ENCODE measurements at regions of chr1 and their contacts with region 1.

Region 1: DNA sequence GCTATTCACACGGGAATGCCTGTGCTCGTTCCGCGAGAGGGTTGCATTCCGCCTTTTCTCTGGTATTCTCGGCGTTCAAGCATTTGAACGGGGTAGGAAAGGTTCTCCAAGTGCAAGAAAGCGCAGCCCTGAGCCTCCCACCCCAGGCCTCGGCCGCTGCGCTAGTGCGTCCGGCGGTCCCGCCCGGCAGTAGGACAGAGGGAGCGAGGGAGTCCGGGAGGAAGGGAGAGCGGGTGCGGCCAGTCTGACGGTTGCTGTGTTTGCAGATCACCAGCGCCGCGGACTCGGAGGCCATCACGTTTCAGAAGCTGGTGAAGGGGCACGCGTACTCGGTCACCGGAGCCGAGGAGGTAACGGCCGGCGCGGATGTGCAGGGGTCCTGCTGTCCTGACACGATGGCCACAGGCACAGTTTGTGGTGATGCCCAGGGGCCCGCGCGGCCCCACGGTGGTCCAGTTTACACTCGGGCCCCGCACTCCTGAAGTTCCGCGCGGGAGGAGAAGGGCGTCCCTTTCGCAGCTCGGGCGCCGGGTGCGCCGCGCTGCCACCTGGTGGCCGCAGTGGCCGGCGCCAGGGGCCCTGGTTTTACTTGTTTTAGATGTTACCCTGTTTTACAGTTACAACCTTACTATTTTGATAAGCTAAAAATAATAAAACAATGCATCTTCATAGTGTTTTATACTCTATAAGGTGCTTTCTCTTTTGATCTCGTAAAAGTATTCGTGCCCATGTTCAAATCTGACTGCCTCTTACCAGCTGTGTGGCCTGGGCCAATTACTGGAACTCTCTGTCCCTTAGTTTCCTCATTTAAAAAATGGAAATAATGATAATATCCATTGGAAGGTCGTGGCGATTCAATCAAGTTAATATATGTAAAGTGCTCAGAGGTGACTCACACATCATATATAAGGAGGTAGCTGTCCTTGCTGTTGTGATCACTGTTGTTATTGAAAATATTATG is 36.7 kb downstream of the CAPN2 start:
- DNase-seq: peak; percentile 53 to 75
- ATAC-seq: peak; percentile 83 to 91 (median 88)
- H3K4me3 ChIP-seq: peak overlapping the region in 9 of 10 donors; percentile 39 to 63 (median 55)
- H3K27ac ChIP-seq: peak overlapping the region; percentile 10 to 86 (median 75)
- H3K4me1 ChIP-seq: peaks cover 14 to 35% (median 24%) of the 10 kb centered on the region in 9 donors
- H3K27me3 ChIP-seq: no peaks in the 10 kb centered on the region
- CTCF ChIP-seq: peak; percentile 93 to 99 (median 98)

Region 2: GRCh38 chr1:223549740-223550139 is 199.3 kb before region 1 on chr1:
- intact Hi-C with region 1: no loop called
- DNase-seq: no peak
- ATAC-seq: no peak
- H3K4me3 ChIP-seq: no peak overlapping the region
- H3K27ac ChIP-seq: no peak overlapping the region
- H3K4me1 ChIP-seq: no peaks in the 10 kb centered on the region
- H3K27me3 ChIP-seq: peaks cover 0 to 4% (median 0%) of the 10 kb centered on the region in 7 donors
- CTCF ChIP-seq: no peak

Region 3: DNA sequence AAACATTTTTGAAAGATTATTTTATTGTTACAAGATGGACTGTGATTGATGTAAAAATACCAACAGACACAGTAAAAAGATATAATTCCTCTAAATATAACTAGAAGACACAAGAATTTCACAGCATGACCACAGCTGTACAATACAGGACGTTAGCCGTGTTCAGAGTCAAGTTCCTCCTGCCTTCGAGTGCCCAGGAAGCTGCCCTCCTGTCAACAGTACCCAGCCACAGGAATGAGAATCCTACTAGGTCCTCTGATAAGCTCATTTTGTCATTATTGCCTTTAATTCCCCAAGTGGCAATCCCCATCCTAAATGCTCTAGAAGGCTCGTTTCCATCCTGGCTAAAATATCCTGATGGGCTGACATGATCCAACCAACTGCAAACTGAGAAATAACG is 53.1 kb before region 1 on chr1:
- intact Hi-C with region 1: loop called in 7 of 10 experiments (anchors 1 to 5 kb)
- DNase-seq: no peak
- ATAC-seq: no peak
- H3K4me3 ChIP-seq: no peak overlapping the region
- H3K27ac ChIP-seq: no peak overlapping the region
- H3K4me1 ChIP-seq: peaks cover 0 to 18% (median 0%) of the 10 kb centered on the region in 9 donors
- H3K27me3 ChIP-seq: no peaks in the 10 kb centered on the region
- CTCF ChIP-seq: no peak

Region 4: GRCh38 chr1:223700942-223701637 is 48.0 kb before region 1 on chr1:
- intact Hi-C with region 1: loop called in 8 of 10 experiments (anchors 1 to 5 kb)
- DNase-seq: no peak
- ATAC-seq: peak in 4 of 8 donors; percentile 10 to 48 (median 35)
- H3K4me3 ChIP-seq: no peak overlapping the region
- H3K27ac ChIP-seq: peak overlapping the region in 6 of 10 donors; percentile 11 to 76 (median 28)
- H3K4me1 ChIP-seq: peaks cover 4 to 43% (median 18%) of the 10 kb centered on the region in 9 donors
- H3K27me3 ChIP-seq: no peaks in the 10 kb centered on the region
- CTCF ChIP-seq: no peak

Region 5: GRCh38 chr1:223712194-223712849 is 36.7 kb before region 1 on chr1 and contains the start of gene CAPN2:
- intact Hi-C with region 1: loop called (anchors 1 to 5 kb)
- DNase-seq: peak; percentile 77 to 89
- ATAC-seq: peak; percentile 87 to 97 (median 94)
- H3K4me3 ChIP-seq: peak within 1 kb of the TSS; percentile 62 to 97 (median 90)
- H3K27ac ChIP-seq: peak within 1 kb of the TSS; percentile 89 to 99 (median 98)
- H3K4me1 ChIP-seq: peaks cover 16 to 83% (median 78%) of the 10 kb centered on the region in 9 donors
- H3K27me3 ChIP-seq: no peaks in the 10 kb centered on the region
- CTCF ChIP-seq: peak; percentile 61 to 91 (median 78)
- total RNA-seq, gene CAPN2: 65.6 to 104 (median 77.6) TPM

Region 6: GRCh38 chr1:223788746-223789415 is 39.8 kb after region 1 on chr1:
- intact Hi-C with region 1: no loop called
- DNase-seq: no peak
- ATAC-seq: no peak
- H3K4me3 ChIP-seq: no peak overlapping the region
- H3K27ac ChIP-seq: no peak overlapping the region
- H3K4me1 ChIP-seq: no peaks in the 10 kb centered on the region
- H3K27me3 ChIP-seq: no peaks in the 10 kb centered on the region
- CTCF ChIP-seq: no peak

Measured in heart right ventricle (tissue), 16 donors.